ENCODE measurements at regions of chr7 and their contacts with region 1.

Region 1: DNA sequence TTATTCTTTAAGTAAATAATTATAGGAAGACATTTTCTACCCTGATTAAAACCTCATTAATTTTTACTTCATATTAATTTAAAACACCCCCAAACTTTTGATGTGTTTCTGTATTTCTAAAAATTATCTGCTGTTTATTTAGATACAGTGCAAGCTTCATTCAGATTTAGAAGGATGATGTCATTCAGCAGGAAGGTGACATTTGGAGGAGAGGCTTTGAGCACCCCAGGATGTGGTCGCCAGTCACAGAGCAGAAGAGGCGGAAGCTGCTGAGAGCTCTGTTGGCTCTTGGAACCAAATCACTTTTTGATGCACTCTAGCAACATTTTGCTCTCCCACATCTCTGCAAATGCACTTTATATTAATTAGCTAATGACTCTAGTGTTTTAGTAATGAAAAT is 233.9 kb upstream of the CACNA2D1 start:
- DNase-seq: peak in 8 of 9 donors; percentile 26 to 65 (median 52)
- ATAC-seq: peak; percentile 93
- H3K4me3 ChIP-seq: no peak overlapping the region
- H3K4me3 Mint-ChIP-seq: peak overlapping the region in 7 of 10 donors; percentile 29 to 59 (median 43)
- H3K27ac ChIP-seq: no peak overlapping the region
- H3K27ac Mint-ChIP-seq: peak overlapping the region in 8 of 9 donors; percentile 26 to 89 (median 76)
- H3K4me1 ChIP-seq: peaks cover 0 to 21% of the 10 kb centered on the region in 2 donors
- H3K4me1 Mint-ChIP-seq: peaks cover 7 to 36% (median 22%) of the 10 kb centered on the region in 7 donors
- H3K27me3 ChIP-seq: no peaks in the 10 kb centered on the region
- H3K27me3 Mint-ChIP-seq: no peaks in the 10 kb centered on the region

Region 2: GRCh38 chr7:82605247-82605872 is 72.1 kb before region 1 on chr7:
- CTCF ChIA-PET with region 1: no interaction called
- POLR2A ChIA-PET with region 1: no interaction called
- intact Hi-C with region 1: loop called in 1 of 2 experiments (anchors 5 kb)
- DNase-seq: no peak
- ATAC-seq: no peak
- H3K4me3 ChIP-seq: no peak overlapping the region
- H3K4me3 Mint-ChIP-seq: no peak overlapping the region
- H3K27ac ChIP-seq: no peak overlapping the region
- H3K27ac Mint-ChIP-seq: no peak overlapping the region
- H3K4me1 ChIP-seq: no peaks in the 10 kb centered on the region
- H3K4me1 Mint-ChIP-seq: no peaks in the 10 kb centered on the region
- H3K27me3 ChIP-seq: no peaks in the 10 kb centered on the region
- H3K27me3 Mint-ChIP-seq: no peaks in the 10 kb centered on the region

Region 3: DNA sequence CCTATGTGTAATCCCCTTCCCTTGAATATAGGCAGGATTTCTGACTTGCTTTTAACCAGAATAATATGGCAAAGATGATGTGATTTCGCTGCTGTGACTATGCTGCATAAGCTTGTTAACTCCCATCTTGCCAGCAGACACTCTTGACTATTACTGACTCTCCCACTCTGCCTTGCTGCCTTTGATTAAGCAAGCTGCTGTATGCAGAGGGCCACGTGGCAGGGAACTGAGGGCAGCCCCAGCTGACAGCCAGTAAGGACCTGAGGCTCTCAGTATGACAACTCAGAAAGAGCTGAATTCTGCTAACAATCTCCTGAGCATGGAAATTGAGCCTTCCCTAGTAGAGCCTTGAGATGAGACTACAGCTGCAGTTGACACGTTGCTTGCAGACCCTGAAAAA is 45.5 kb after region 1 on chr7:
- CTCF ChIA-PET with region 1: no interaction called
- POLR2A ChIA-PET with region 1: no interaction called
- intact Hi-C with region 1: loop called (anchors 5 kb)
- DNase-seq: no peak
- ATAC-seq: no peak
- H3K4me3 ChIP-seq: no peak overlapping the region
- H3K4me3 Mint-ChIP-seq: no peak overlapping the region
- H3K27ac ChIP-seq: no peak overlapping the region
- H3K27ac Mint-ChIP-seq: peak overlapping the region in 1 of 9 donors; percentile 6
- H3K4me1 ChIP-seq: no peaks in the 10 kb centered on the region
- H3K4me1 Mint-ChIP-seq: no peaks in the 10 kb centered on the region
- H3K27me3 ChIP-seq: no peaks in the 10 kb centered on the region
- H3K27me3 Mint-ChIP-seq: no peaks in the 10 kb centered on the region

Measured in naive thymus-derived CD4-positive, alpha-beta T cell (primary cell).